ENCODE measurements at regions of chr1 and their contacts with region 1.

Region 1: DNA sequence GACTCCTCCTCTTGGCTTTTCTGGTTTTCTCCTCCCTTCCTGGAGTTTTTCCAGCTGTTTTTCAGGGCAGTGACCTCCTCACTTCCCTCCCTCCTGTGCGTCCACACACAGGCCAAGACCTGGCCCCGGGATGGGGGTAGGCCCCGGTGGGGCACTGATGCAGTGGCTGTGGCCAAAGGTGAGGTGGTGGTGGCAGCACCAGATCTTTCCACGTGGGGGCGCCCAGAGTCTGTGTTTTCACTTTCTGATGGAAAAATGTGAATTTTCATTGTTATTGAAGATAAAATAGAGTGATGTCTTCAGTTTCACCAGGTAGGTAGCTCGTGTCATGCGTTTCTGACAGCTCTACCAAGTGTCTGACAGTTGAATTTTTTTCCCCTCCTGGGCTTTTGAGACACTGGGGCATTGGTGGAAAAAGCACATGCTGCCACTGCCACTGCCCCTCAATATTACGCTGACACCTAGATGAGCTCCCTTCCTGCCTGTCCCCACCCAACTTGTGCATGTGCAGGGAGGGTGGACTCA is 39.9 kb upstream of the MAGOH start:
- DNase-seq: peak in 1 of 2 donors; percentile 21
- H3K4me3 ChIP-seq: no peak overlapping the region
- H3K27ac ChIP-seq: no peak overlapping the region
- H3K4me1 ChIP-seq: no peaks in the 10 kb centered on the region
- H3K27me3 ChIP-seq: no peaks in the 10 kb centered on the region
- CTCF ChIP-seq: peak; percentile 72 to 94 (median 89)
- POLR2A ChIP-seq: no peak

Region 2: GRCh38 chr1:53172426-53173128 is 105.7 kb before region 1 on chr1:
- intact Hi-C with region 1: no loop called
- DNase-seq: no peak
- H3K4me3 ChIP-seq: no peak overlapping the region
- H3K27ac ChIP-seq: no peak overlapping the region
- H3K4me1 ChIP-seq: no peaks in the 10 kb centered on the region
- H3K27me3 ChIP-seq: no peaks in the 10 kb centered on the region
- CTCF ChIP-seq: no peak
- POLR2A ChIP-seq: no peak

Region 3: DNA sequence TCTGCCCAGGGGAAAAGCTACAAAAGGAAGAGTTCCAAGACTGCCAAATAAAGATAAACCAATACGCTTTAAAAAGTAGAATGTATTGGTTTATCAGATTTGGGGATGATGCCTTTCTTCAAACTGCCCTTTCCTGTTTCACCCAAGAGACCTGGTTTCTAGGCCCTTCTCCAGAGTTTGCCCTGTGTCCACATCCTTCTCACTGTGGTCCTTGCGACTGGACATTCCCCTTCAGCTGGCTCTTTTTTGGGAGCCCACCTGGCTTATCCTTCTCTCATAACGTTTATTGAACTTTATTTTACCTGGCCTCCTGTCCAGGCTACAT is 57.3 kb before region 1 on chr1:
- intact Hi-C with region 1: no loop called
- DNase-seq: no peak
- H3K4me3 ChIP-seq: peak overlapping the region; percentile 78 to 87 (median 84)
- H3K27ac ChIP-seq: peak overlapping the region; percentile 93 to 98
- H3K4me1 ChIP-seq: peaks cover 0 to 8% of the 10 kb centered on the region in 2 donors
- H3K27me3 ChIP-seq: no peaks in the 10 kb centered on the region
- CTCF ChIP-seq: no peak
- POLR2A ChIP-seq: no peak

Region 4: GRCh38 chr1:53255031-53255430 is 23.2 kb before region 1 on chr1:
- intact Hi-C with region 1: no loop called
- DNase-seq: no peak
- H3K4me3 ChIP-seq: no peak overlapping the region
- H3K27ac ChIP-seq: no peak overlapping the region
- H3K4me1 ChIP-seq: no peaks in the 10 kb centered on the region
- H3K27me3 ChIP-seq: no peaks in the 10 kb centered on the region
- CTCF ChIP-seq: no peak
- POLR2A ChIP-seq: no peak

Region 5: DNA sequence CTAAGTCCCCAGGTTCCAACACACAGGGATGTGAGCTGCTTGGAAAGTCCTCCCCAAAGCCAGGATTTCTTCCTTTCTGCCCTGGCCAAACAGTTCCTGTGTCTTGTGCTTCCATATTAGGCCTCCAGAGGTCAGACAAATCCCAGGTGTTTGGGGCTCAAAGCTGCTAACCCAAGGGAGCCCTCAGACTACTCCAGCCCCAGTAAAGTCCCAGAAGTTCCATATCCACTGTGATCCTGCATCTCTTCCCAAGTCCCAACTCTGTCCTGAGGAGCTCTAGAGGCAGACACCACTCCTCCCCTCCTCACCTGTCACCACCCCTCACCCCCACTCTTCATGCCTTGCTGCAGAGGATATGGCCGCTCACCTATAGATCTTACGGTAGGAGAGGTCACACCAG is 12.2 kb before region 1 on chr1:
- intact Hi-C with region 1: no loop called
- DNase-seq: no peak
- H3K4me3 ChIP-seq: no peak overlapping the region
- H3K27ac ChIP-seq: no peak overlapping the region
- H3K4me1 ChIP-seq: no peaks in the 10 kb centered on the region
- H3K27me3 ChIP-seq: no peaks in the 10 kb centered on the region
- CTCF ChIP-seq: no peak
- POLR2A ChIP-seq: no peak

Region 6: GRCh38 chr1:53393325-53393792 is 115.1 kb after region 1 on chr1:
- intact Hi-C with region 1: loop called (anchors 5 kb)
- DNase-seq: peak; percentile 56 to 81
- H3K4me3 ChIP-seq: no peak overlapping the region
- H3K27ac ChIP-seq: no peak overlapping the region
- H3K4me1 ChIP-seq: no peaks in the 10 kb centered on the region
- H3K27me3 ChIP-seq: no peaks in the 10 kb centered on the region
- CTCF ChIP-seq: peak; percentile 78 to 89 (median 86)
- POLR2A ChIP-seq: no peak